ENCODE measurements at regions of chr11 and their contacts with region 1.

Region 1: DNA sequence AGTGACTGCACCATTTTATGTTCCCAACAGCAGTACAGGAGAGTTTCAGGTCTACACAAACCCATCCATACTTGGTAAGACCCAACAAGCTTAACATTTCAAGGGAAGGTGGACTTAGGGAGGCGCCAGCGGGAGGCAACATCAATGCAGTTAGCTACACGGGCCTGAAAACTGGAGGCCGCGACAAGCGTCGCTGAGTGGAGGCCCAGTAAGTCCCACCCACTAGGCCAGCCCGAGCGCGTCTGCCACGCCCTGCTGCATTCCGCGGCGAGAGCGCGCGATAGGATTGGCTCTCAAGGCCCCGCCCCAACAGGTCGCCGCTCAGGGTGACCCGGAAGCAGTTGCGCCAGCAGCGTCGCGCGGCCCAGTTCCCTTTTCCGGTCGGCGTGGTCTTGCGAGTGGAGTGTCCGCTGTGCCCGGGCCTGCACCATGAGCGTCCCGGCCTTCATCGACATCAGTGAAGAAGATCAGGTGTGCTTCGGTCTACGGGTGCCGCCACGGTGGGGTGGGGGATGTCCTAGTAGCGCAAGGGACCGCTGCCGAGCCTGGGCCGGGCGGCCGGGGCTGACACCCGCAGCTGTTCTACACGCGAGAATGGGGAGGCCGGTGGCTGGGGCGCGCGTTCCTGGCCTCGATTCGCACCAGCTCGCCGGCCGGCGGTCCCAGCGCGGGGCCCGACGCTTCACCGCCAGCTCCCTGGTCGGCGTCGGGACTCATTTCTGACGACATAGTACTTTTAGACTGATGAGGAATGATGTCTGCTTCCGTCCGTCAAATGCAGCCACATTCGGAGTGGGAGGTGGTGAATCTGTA is at the start of gene EIF3M:
- DNase-seq: peak; percentile 96
- H3K4me3 Mint-ChIP-seq: peak within 1 kb of the TSS; percentile 96
- H3K27ac Mint-ChIP-seq: peak within 1 kb of the TSS; percentile 98
- H3K4me1 Mint-ChIP-seq: peaks cover 18% of the 10 kb centered on the region
- H3K27me3 Mint-ChIP-seq: no peaks in the 10 kb centered on the region
- CTCF ChIP-seq: no peak
- total RNA-seq, gene EIF3M: 356 and 443 TPM in 2 replicates

Region 2: DNA sequence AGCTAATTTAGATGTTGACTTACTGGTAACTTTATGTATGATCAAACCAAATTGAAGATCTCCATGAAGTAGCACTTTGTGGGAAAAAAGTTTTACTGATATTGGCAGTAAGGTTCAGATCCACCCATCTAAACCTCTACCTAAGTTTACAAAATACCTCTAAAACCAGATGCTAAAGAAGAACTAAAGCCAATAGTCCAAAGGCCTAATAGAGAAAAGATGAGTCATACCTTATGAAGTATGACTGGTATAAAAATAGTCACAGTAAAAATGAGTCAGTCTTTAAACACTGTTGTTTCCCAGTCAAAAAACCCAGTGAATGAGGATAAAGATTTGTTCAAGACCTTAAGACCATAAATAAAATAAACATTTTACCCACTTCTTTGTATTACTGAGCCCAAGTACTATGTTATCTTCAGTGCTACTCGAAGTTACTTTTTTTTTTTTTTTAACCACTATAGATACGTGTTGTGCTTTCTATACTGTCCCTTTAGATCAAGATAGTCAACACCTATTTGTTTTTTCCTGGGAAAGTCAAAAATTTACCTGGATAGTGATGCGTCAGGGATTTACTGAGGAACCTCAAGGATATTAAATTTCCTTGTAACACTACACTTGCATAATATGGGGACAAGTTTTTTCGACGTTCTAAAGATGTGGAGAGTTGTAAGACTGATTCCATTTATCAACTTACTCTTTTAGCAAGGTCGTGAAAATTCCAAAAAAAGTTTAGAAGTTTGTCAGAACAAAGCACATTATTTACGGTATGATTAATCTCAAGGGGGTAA is 123.5 kb after region 1 on chr11:
- CTCF ChIA-PET with region 1: interaction called, 3 read pairs
- POLR2A ChIA-PET with region 1: no interaction called
- intact Hi-C with region 1: loop called (anchors 5 kb)
- DNase-seq: peak; percentile 76
- H3K4me3 Mint-ChIP-seq: no peak overlapping the region
- H3K27ac Mint-ChIP-seq: peak overlapping the region; percentile 32
- H3K4me1 Mint-ChIP-seq: peaks cover 13% of the 10 kb centered on the region
- H3K27me3 Mint-ChIP-seq: no peaks in the 10 kb centered on the region
- CTCF ChIP-seq: no peak